Tibial artery (tissue), 4 donors: ENCODE measurements at regions of chr1 and their contacts with region 1.

Region 1: DNA sequence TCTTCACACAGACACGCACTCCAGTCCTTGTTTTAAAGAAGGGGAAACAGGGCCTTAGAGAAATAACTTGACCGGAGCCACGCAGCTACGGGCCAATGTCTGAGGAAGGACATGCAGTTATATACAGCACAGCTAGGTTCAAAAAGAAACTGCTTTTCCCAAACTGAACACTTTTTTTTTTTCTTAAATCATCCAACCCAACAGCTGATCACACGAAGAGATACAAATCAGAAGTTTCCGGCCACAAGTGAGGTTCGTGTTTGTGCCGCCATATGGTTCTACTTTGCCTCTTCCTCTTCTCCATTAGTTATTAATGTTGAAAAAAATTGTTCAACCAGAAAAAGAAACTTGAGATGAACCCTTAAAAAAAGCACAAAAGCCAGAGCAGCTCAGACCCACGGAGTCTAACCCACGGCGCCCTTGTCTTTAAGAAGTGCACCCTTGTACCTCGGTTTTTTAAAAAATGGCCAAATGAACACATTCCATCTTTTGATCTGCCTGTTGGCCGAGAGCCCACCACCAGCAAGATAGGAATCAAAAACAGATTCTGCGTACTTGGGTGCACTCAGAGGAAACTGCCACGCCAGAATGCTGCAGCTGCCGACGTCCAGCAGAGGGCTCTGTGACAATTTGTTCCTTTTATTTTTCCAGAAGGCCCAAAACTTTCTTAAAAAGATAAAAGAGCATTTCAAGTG is 78.9 kb downstream of the SLC66A1 start:
- DNase-seq: peak in 1 of 2 donors; percentile 66
- H3K4me3 ChIP-seq: peak overlapping the region; percentile 12 to 17
- H3K27ac ChIP-seq: peak overlapping the region; percentile 66 to 68
- H3K4me1 ChIP-seq: peaks cover 0 to 91% (median 50%) of the 10 kb centered on the region in 4 donors
- H3K27me3 ChIP-seq: no peaks in the 10 kb centered on the region
- CTCF ChIP-seq: peak; percentile 77 to 89

Region 2: GRCh38 chr1:19485362-19486187 is 94.5 kb after region 1 on chr1 and contains the start of gene CAPZB:
- intact Hi-C with region 1: loop called (anchors 10 kb)
- DNase-seq: peak; percentile 93 to 97
- H3K4me3 ChIP-seq: peak within 1 kb of the TSS; percentile 66 to 84
- H3K27ac ChIP-seq: peak within 1 kb of the TSS; percentile 90 to 97
- H3K4me1 ChIP-seq: peaks cover 0 to 61% (median 55%) of the 10 kb centered on the region in 4 donors
- H3K27me3 ChIP-seq: no peaks in the 10 kb centered on the region
- CTCF ChIP-seq: peak in 1 of 2 experiments; percentile 14

Region 3: DNA sequence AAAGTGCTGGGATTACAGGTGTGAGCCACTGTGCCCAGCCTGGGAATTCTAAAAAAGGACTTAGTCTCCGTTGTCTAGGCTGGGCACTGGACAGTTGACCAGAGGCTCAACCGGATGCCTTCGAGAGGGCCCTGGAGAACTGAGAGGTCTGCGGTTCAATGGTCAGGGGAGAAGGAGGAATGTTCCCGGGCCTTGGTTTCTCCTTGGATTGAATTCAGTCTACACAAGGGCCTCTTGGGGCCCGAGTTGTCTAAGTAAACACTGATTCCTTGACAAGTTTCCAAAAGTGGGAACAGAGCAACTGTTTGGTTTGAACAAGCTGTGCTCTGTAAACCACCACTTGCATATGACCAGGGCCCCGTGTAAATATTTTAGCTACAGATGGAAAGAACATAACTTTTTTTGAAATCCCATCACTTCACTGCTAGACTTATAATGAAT is 123.4 kb after region 1 on chr1:
- intact Hi-C with region 1: no loop called
- DNase-seq: peak; percentile 71 to 84
- H3K4me3 ChIP-seq: no peak overlapping the region
- H3K27ac ChIP-seq: peak overlapping the region; percentile 34 to 58
- H3K4me1 ChIP-seq: peaks cover 0 to 15% (median 4%) of the 10 kb centered on the region in 4 donors
- H3K27me3 ChIP-seq: no peaks in the 10 kb centered on the region
- CTCF ChIP-seq: no peak

Region 4: DNA sequence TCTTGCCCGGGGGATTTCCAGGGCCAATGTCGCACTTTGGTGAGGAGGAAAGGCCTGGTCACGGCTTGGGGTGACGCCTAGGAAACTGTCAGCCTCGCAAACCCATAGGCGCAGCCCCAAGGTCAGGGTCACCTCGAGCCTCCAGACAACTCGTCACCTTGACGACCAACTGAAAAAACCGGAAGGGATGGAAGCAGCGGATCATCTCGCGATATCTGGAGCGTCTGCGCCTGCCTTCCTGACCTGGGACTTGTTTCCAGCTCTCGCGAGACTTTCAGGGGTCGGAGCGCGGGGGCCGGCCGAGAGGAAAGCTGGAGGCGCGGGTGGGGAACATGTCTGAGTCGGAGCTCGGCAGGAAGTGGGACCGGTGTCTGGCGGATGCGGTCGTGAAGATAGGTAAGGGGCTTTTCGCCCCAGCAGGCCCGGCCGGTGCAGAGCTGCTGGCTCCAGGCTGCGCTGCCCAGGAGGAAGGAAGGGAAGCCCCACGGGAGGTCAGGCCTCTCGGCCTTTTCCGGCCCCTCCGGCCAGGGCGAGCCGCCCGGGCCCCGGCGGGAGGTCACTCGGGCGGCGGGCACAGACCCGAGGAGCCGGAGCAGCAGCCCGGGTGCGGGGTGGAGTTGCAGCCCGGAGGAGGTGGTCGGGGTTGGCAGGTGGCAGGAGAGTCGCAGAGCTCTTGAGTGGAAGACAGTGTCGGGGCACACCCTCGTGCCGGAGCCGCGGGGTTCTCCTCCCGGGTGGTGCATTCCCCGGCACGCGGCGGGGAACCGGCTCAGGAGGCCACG is 205.9 kb after region 1 on chr1:
- intact Hi-C with region 1: loop called (anchors 10 kb)
- DNase-seq: peak; percentile 96 to 98
- H3K4me3 ChIP-seq: peak overlapping the region; percentile 73 to 92
- H3K27ac ChIP-seq: peak overlapping the region; percentile 86 to 92
- H3K4me1 ChIP-seq: peaks cover 0 to 34% (median 22%) of the 10 kb centered on the region in 4 donors
- H3K27me3 ChIP-seq: no peaks in the 10 kb centered on the region
- CTCF ChIP-seq: no peak

Region 5: DNA sequence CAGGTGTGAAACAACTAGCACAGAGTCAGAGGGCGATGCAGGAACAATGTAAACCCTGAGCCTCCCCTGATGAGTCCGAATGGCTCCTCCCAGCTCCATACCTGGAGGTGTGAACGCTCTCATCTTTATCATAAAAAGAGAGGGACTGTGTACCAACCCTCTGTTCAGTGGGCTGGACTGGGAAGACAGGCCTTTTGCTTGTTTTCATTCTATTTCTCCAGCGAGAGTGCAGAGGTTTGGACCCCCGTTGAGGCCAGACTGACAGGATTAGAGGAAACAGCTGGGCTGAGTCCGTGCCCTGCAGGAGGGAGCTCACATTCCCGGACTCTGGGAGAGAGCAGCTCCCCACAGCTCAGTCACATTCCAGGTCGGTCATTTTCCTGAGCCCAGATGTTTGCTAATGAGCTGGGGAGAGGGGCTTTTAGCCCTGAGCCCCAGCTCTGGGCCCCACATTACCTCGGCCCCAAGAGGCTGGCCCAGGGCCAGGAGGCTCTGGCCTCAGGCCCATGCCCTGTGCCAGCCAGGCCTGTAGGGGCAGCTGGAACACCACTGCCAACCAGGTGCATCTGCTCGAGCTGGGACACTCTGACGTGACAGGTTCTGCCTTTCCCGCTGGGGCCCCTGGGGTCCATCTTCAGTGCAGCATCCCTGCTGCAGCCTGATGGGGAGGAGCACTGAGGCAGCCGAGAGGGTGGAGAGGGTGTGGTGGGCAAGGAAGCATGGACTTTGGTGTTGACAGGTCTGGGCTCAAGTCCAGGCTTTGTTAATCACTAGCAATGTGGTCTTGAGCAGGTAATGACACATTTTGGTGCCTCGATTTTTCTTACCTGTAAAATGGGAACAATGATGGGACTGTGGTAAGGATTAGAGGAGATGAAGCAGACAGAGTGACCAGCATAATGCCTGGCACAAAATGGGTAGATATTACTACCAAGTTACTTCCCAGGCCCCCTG is 249.6 kb after region 1 on chr1:
- intact Hi-C with region 1: no loop called
- DNase-seq: peak in 1 of 2 donors; percentile 41
- H3K4me3 ChIP-seq: no peak overlapping the region
- H3K27ac ChIP-seq: no peak overlapping the region
- H3K4me1 ChIP-seq: peaks cover 0 to 29% (median 21%) of the 10 kb centered on the region in 4 donors
- H3K27me3 ChIP-seq: no peaks in the 10 kb centered on the region
- CTCF ChIP-seq: no peak

Region 6: GRCh38 chr1:19651141-19651737 is 260.2 kb after region 1 on chr1:
- intact Hi-C with region 1: loop called (anchors 5 kb)
- DNase-seq: peak in 1 of 2 donors; percentile 80
- H3K4me3 ChIP-seq: no peak overlapping the region
- H3K27ac ChIP-seq: peak overlapping the region; percentile 53 to 66
- H3K4me1 ChIP-seq: peaks cover 0 to 72% (median 49%) of the 10 kb centered on the region in 4 donors
- H3K27me3 ChIP-seq: no peaks in the 10 kb centered on the region
- CTCF ChIP-seq: peak; percentile 74 to 79